Naive thymus-derived CD8-positive, alpha-beta T cell (primary cell): ENCODE measurements at regions of chr3 and their contacts with region 1.

Region 1: DNA sequence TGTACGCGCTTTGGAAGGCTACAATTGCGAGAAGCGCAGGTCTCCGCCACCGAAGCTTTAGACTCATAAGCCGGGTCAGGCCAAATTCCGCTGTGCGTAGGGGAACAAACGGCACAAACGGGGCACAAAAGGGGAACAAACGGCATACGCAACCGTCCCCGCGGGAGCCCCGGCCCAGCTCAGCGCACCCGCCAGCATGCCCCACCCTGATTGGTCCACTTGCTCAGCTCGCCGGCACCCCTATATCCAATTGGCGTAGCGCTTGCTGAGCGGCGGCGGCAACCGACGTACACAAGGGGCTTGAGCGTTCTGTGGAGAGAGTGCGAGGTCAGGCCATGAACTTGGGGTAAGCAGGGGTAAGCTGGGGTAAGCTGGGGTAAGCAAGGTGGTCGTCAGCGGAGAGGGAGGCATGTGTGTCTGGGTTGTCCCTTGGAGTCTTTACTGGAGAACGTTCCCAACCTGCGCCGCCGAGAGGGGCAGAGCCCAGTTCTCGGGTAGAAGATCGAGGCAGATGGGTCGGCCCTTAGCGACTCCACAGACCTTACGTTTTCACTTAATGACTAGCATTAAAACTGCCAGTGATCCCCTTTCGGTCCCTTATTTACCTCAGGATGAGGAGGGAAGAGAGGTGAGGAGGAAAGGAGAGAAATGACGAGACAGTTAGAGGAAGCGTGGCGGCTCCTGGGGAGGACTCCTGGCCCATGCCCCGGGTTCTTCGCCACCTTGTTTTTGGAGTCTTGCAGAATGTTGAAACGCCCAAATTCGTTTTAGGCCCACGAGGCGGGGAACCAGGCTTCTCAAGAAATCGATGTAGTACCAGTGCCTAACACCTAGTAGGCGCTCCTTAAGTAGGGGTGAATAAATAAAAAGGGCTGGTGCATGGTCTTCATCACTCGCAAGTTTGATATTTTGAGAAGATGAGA is at the start of gene CCDC66:
- DNase-seq: peak; percentile 88 to 97 (median 94)
- ATAC-seq: peak; percentile 91 to 94
- H3K4me3 Mint-ChIP-seq: peak within 1 kb of the TSS; percentile 91 to 100 (median 97)
- H3K27ac Mint-ChIP-seq: peak within 1 kb of the TSS; percentile 95 to 100 (median 99)
- H3K4me1 Mint-ChIP-seq: peaks cover 19 to 38% (median 28%) of the 10 kb centered on the region in 4 donors
- H3K27me3 Mint-ChIP-seq: peaks cover 0 to 3% (median 0%) of the 10 kb centered on the region in 5 donors
- polyA plus RNA-seq, gene CCDC66: 16.8 to 28.9 (median 20.9) TPM

Region 2: DNA sequence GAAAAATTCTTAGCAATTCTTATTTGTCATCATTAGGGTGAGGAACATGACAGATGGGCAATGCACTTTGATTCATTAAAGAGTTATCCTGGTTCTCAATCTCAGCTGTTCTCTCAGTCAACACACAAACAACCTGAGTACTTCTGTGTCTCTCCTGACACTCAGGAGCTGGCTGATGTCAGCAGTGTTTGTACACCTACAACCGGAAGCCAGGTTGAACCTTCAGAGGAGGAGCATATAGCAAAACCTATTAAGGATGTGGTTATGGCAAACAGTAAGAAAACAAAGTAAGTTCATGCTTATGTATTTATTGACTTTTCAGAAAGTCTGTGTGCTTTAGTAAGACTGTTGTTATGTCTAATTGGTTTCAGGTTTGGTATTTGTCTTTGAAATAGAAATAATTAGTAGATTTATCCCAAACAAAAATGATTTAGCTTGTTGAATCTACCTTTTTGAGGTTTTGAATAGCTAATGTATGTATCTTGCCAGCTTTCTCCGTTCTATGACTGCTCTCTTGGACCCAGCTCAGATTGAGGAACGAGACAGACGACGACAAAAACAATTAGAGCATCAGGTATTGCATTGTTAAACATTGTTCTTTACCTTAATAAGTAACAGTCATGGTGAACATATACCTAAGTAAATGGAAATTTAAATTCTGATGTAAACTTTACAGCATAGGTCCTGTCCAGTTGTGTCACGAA is 36.4 kb after region 1 on chr3:
- POLR2A ChIA-PET with region 1: interaction called, 15 read pairs
- DNase-seq: peak in 9 of 10 donors; percentile 24 to 82 (median 62)
- ATAC-seq: peak; percentile 98 to 100
- H3K4me3 Mint-ChIP-seq: peak overlapping the region; percentile 46 to 84 (median 66)
- H3K27ac Mint-ChIP-seq: peak overlapping the region; percentile 89 to 98 (median 96)
- H3K4me1 Mint-ChIP-seq: peaks cover 34 to 78% (median 73%) of the 10 kb centered on the region in 4 donors
- H3K27me3 Mint-ChIP-seq: no peaks in the 10 kb centered on the region